Dorsolateral prefrontal cortex (tissue), 120 donors: ENCODE measurements at regions of chr20 and their contacts with region 1.

Region 1: GRCh38 chr20:16517946-16518783 is 55.1 kb downstream of the KIF16B start:
- DNase-seq: peak in 4 of 10 donors; percentile 35 to 52 (median 49)
- H3K4me3 ChIP-seq: no peak overlapping the region
- H3K27ac ChIP-seq: no peak overlapping the region
- H3K27me3 ChIP-seq: no peaks in the 10 kb centered on the region
- CTCF ChIP-seq: peak; percentile 37 to 79 (median 65)

Region 2: DNA sequence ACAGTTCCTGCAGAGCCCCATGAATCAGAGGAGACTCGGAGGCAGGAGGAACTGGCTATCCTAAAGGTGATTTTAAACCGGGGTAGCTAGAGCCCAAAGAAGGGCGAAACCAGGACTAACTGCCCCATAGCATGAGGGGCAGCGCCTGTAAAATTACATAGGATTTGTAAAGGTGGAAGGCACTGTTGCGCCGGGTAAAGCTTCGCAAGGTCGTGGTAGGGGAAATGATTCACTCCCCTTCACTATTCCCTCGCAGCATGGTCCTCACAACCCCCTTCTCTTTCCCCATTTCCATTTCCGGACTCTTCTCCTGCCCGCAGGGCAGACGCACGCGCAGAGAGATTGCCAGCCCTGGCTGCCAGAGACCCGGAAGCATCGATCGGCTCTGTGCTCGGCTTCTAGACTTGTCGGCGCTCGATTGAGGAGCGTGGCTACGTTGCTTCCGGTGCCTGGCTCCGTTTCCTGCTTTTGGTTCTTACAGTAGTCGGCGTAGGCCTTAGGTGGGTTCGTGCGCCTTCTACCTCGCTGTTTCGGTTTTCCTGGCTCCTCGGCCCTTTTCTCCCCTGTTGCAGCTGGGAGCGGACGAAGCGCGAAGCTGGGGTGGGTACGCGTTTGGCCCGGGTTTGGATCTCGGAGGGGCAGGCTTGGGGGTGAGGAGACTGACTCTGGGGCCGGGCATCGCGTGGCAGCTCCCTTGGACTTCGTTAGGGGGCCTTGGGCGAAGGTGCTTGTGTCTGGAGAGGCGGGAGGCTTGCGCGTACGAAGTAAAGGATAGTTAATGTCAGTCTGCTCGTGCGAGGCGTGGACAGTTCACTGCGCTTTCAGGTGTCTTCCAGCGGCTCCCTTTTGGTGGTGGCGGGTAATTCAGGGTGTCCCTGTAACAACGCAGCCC is 211.6 kb after region 1 on chr20 and contains the start of gene SNRPB2:
- intact Hi-C with region 1: loop called in 1 of 2 experiments (anchors 10 kb)
- DNase-seq: peak; percentile 89 to 97 (median 94)
- H3K4me3 ChIP-seq: peak within 1 kb of the TSS; percentile 69 to 100 (median 93)
- H3K27ac ChIP-seq: peak within 1 kb of the TSS in 58 of 59 donors; percentile 12 to 93 (median 73)
- H3K27me3 ChIP-seq: peaks cover 0 to 33% (median 0%) of the 10 kb centered on the region in 45 donors
- CTCF ChIP-seq: peak in 31 of 56 donors; percentile 6 to 53 (median 22)
- total RNA-seq, gene SNRPB2: 13.8 to 51.6 (median 33.7) TPM

Region 3: GRCh38 chr20:16761305-16761829 is 243.2 kb after region 1 on chr20:
- intact Hi-C with region 1: loop called in 1 of 2 experiments (anchors 2 kb)
- DNase-seq: peak in 6 of 10 donors; percentile 33 to 78 (median 42)
- H3K4me3 ChIP-seq: no peak overlapping the region
- H3K27ac ChIP-seq: peak overlapping the region in 1 of 59 donors; percentile 1
- H3K27me3 ChIP-seq: peaks cover 0 to 7% (median 0%) of the 10 kb centered on the region in 45 donors
- CTCF ChIP-seq: peak; percentile 48 to 89 (median 80)